ENCODE measurements at regions of chr20 and their contacts with region 1.

Region 1: GRCh38 chr20:278181-278580 is 12.4 kb downstream of the C20orf96 start:
- DNase-seq: no peak
- H3K4me3 ChIP-seq: no peak overlapping the region
- H3K27ac ChIP-seq: no peak overlapping the region
- H3K4me1 ChIP-seq: no peaks in the 10 kb centered on the region
- H3K27me3 ChIP-seq: no peaks in the 10 kb centered on the region
- CTCF ChIP-seq: no peak

Region 2: GRCh38 chr20:290084-290831 is 12.1 kb after region 1 on chr20 and contains the start of gene C20orf96:
- CTCF ChIA-PET with region 1: no interaction called
- POLR2A ChIA-PET with region 1: interaction called, 11 read pairs
- intact Hi-C with region 1: no loop called
- DNase-seq: peak; percentile 90 to 93
- H3K4me3 ChIP-seq: peak within 1 kb of the TSS; percentile 96
- H3K27ac ChIP-seq: peak within 1 kb of the TSS; percentile 53
- H3K4me1 ChIP-seq: peaks cover 7% of the 10 kb centered on the region
- H3K27me3 ChIP-seq: no peaks in the 10 kb centered on the region
- CTCF ChIP-seq: peak; percentile 58; the same call in 1 of the 2 replicates
- total RNA-seq, gene C20orf96: 20.7 and 25.7 TPM in 2 replicates

Region 3: DNA sequence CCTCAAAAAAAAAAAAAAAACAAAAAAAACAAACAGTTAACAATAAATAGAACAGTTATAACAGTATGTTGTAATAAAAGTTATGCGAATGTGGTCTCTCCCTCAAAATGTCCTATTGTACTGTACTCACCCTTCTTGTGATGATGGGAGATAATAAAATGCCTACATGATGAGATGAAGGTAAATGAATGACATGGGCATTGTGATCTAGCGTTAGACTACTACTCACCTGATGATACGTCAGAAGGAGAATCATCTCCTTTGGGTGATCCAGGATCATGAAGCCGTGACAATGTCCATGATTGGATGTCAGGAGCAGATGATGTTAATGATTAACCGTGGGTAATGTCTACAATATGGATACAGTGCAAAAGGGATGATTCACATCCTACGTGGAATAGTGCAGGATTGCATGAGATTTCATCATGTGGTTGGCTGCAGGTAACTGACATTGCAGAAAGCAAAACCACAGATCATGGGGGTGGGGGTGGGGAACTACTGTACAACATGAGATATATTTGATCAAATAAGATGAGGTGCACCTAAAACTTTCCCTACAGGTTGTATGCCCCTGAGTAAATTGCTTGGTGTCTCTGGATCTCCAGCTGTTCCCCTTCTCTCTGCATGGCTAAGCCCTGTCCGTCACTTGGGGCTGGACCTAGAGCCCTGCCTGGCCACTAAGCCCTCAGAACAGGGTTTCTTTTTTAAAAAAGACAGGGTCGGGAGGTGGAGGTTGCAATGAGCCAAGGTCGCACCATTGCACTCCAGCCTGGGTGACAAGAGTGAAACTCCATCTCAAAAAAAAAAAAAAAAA is 123.7 kb after region 1 on chr20:
- CTCF ChIA-PET with region 1: no interaction called
- POLR2A ChIA-PET with region 1: no interaction called
- intact Hi-C with region 1: no loop called
- DNase-seq: peak; percentile 25 to 87
- H3K4me3 ChIP-seq: no peak overlapping the region
- H3K27ac ChIP-seq: peak overlapping the region; percentile 96
- H3K4me1 ChIP-seq: peaks cover 32% of the 10 kb centered on the region
- H3K27me3 ChIP-seq: no peaks in the 10 kb centered on the region
- CTCF ChIP-seq: no peak